Activated naive CD4-positive, alpha-beta T cell treated with anti-CD3 and anti-CD28 coated beads, Interleukin-2, amount 10 ng/mL, durations not matched to agents 7 days and 5 days (primary cell): ENCODE measurements at regions of chr1 and their contacts with region 1.

Region 1: DNA sequence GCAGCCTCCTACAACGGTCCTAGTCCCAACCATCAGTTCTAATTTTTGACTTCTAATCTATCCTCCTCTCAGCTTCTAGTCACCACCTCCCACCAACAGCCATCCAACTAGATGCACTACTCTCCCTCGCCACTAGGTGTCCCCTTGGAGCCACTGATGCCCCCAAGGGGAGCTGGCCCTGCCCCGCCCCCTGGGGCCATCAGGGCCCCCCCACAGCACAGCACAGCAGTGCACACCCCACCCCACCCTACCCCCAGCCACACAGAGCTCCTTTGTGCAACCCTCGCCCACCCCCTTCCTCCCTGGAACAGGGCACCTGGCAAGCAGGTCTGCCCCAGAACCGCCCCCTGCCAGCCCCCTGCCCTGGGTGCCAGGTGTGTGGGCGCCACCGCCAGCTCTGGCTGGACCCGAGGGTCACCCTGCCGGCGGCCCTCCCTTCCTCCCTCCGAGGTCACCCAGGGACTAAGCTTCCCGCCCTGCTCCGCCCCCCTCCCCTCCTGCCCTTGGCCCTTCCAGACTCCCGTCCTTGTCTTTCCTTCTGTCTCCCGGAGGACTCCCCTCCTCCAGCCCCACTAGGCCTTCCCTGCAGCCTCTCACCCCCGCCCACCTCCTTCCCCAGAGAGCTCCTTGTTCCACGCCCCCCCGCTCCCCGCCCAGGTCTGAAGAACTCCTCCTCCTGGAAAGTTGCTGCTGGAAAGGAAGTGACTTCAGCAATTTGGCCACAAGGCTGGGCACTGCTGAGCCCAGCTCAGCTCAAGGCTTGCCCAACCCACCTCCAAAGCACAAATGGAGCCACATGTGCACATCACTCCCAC is 47.0 kb downstream of the AHDC1 start:
- DNase-seq: peak; percentile 83
- H3K4me3 Mint-ChIP-seq: peak overlapping the region; percentile 48
- H3K27ac Mint-ChIP-seq: peak overlapping the region; percentile 84
- H3K4me1 Mint-ChIP-seq: peaks cover 35% of the 10 kb centered on the region
- H3K27me3 Mint-ChIP-seq: no peaks in the 10 kb centered on the region

Region 2: GRCh38 chr1:27525296-27526272 is 31.4 kb before region 1 on chr1:
- CTCF ChIA-PET with region 1: interaction called, 35 read pairs
- DNase-seq: peak; percentile 82
- H3K4me3 Mint-ChIP-seq: peak overlapping the region; percentile 74
- H3K27ac Mint-ChIP-seq: peak overlapping the region; percentile 73
- H3K4me1 Mint-ChIP-seq: peaks cover 79% of the 10 kb centered on the region
- H3K27me3 Mint-ChIP-seq: no peaks in the 10 kb centered on the region

Region 3: DNA sequence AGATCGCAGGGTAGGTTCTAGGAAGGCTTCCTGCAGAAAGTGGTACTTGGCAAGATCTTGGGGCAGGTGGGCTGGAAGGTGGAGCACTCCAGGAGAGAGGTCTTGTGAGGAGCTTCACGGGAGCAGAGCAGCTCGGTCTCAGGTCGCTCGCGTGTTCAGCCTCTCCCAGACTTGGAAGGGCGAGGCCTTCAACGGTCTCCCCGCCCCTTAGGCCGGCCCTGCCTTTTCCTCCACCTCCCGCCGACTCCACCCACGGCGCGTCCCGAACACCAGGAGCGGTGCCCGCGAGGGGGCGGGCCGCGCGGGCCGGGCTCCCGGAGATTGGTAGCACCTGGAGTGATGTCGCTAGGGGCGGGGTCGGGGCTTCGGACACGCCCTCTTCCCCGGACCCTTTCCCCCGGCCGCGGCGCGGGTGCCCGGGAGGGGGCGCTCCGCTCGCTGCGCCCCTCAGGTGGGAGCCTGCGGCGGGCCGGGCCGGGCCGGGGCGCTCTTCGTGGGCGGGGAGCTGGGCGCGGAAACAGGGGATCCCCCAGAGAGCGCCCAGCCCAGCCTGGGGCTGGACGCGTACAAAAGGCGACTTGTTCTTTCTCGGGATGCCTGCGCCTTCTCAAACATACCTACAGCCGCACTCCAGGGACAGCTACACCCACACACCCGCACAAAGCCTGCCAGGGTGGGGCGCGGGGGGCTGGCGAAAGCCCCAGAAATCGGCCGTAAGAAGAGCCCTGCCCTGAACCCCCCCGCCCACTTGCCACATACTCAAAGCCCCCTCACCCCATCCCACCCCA is 11.5 kb after region 1 on chr1:
- CTCF ChIA-PET with region 1: interaction called, 97 read pairs
- DNase-seq: peak; percentile 96
- H3K4me3 Mint-ChIP-seq: peak overlapping the region; percentile 56
- H3K27ac Mint-ChIP-seq: no peak overlapping the region
- H3K4me1 Mint-ChIP-seq: peaks cover 25% of the 10 kb centered on the region
- H3K27me3 Mint-ChIP-seq: peaks cover 28% of the 10 kb centered on the region

Region 4: DNA sequence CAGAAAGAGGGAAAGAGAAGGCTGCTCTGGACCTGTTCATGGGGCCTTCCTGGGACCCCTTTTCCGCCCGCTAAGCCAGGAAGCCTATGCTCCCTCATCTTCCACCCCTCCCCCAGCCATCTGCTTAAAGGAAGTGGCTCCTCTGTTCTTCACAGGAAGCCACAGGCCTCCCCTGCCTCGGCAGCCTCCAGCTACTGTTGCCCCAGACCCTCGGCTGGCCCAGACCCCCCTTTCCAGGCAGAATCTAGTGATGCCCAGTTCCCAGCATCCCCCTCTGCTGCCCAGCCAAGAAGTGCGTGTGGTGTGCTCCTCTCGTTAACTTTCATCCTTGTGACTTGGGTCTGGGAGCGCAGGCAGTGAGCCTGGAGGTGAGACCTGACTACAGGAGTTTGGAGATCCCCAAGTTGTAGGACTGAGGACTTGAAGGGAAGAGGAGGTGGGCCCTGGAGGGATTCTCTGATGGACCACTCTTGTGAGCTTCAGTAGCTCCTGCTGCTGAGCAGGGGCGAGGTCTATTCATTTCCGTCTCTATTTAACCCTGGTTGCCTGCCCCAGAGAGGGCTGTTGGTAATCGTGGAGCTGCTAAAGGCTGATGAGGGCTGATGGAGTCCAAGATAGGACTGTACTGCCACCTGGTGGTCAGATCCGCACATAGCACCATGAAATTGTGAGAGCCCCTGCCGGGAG is 105.9 kb after region 1 on chr1:
- CTCF ChIA-PET with region 1: interaction called, 14 read pairs
- DNase-seq: peak; percentile 93
- H3K4me3 Mint-ChIP-seq: peak overlapping the region; percentile 70
- H3K27ac Mint-ChIP-seq: peak overlapping the region; percentile 99
- H3K4me1 Mint-ChIP-seq: peaks cover 51% of the 10 kb centered on the region
- H3K27me3 Mint-ChIP-seq: no peaks in the 10 kb centered on the region

Region 5: GRCh38 chr1:28213315-28213714 is 656.3 kb after region 1 on chr1:
- CTCF ChIA-PET with region 1: no interaction called
- DNase-seq: no peak
- H3K4me3 Mint-ChIP-seq: no peak overlapping the region
- H3K27ac Mint-ChIP-seq: no peak overlapping the region
- H3K4me1 Mint-ChIP-seq: peaks cover 7% of the 10 kb centered on the region
- H3K27me3 Mint-ChIP-seq: no peaks in the 10 kb centered on the region